ENCODE measurements at regions of chr1 and their contacts with region 1.

Region 1: GRCh38 chr1:38026592-38027200 is 14.2 kb downstream of the UTP11 start:
- DNase-seq: no peak
- H3K4me3 Mint-ChIP-seq: no peak overlapping the region
- H3K27ac Mint-ChIP-seq: peak overlapping the region; percentile 31
- H3K4me1 Mint-ChIP-seq: peaks cover 51% of the 10 kb centered on the region
- H3K27me3 Mint-ChIP-seq: no peaks in the 10 kb centered on the region

Region 2: DNA sequence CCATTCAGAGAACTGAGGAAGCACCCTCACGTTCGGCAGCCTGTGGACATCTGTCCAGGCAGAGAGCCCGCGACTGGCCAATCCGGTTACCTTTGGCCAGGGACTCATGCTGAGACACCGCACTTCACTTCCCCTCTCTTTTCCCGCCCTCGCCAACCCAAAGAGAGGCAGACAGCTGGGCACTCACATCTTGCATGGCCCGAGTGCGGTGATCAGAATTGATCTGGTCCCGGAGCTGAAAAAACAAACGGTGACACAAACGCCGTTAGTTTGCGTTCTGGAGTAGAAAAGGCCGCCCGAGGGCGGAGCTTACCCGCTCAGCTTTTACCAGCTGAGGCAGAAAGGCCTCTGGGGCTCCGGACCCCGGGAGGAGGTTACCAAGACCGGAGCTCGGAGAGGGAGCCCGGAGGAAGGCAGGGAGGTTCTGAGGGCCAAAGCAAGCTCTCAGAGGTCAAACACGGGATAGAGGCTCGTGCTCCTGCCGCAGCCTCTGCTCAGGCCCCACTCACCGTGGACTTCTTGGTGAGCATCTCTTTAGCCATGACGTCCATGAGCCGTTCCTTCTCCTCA is 37.2 kb before region 1 on chr1:
- intact Hi-C with region 1: loop called (anchors 1 kb)
- DNase-seq: peak; percentile 48
- H3K4me3 Mint-ChIP-seq: peak overlapping the region; percentile 99
- H3K27ac Mint-ChIP-seq: peak overlapping the region; percentile 95
- H3K4me1 Mint-ChIP-seq: peaks cover 16% of the 10 kb centered on the region
- H3K27me3 Mint-ChIP-seq: no peaks in the 10 kb centered on the region

Region 3: DNA sequence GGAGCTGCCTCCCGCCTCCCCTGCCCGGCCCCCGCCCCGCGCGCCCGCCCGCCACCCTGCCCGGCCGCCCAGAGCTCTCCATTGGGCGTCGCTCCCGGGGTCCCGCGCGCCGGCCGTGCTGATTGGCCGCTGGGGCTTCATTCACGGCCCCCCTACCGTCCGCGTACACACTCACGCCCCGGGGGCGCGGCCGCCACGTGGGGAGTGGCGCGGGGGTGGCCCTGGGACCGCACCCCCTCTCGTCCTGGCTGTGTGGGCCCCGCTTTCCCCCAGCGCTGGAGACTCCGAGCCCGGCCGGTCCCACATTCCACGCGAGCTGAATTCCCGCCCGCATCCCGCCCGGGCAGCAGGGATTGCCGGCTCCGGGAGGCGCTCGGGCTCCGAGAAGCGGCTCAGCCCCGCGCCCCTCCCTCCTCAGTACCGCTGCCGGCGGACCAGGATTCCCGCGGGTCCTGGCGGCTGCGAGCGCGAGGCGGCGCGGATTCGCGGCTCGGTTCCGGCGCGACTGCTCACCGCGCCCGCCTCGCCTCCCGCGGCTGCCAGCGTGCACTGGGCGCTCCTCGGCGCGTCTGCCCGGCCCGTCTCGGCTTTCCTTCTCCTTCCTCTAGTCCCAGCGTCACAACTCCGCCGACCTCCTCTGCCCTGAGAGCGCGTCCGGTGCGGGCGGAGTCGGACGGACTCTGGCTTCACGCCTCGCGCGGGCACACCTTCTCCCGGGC is 20.3 kb after region 1 on chr1:
- intact Hi-C with region 1: loop called (anchors 1 kb)
- DNase-seq: peak; percentile 62
- H3K4me3 Mint-ChIP-seq: peak overlapping the region; percentile 79
- H3K27ac Mint-ChIP-seq: no peak overlapping the region
- H3K4me1 Mint-ChIP-seq: peaks cover 5% of the 10 kb centered on the region
- H3K27me3 Mint-ChIP-seq: peaks cover 41% of the 10 kb centered on the region

Region 4: DNA sequence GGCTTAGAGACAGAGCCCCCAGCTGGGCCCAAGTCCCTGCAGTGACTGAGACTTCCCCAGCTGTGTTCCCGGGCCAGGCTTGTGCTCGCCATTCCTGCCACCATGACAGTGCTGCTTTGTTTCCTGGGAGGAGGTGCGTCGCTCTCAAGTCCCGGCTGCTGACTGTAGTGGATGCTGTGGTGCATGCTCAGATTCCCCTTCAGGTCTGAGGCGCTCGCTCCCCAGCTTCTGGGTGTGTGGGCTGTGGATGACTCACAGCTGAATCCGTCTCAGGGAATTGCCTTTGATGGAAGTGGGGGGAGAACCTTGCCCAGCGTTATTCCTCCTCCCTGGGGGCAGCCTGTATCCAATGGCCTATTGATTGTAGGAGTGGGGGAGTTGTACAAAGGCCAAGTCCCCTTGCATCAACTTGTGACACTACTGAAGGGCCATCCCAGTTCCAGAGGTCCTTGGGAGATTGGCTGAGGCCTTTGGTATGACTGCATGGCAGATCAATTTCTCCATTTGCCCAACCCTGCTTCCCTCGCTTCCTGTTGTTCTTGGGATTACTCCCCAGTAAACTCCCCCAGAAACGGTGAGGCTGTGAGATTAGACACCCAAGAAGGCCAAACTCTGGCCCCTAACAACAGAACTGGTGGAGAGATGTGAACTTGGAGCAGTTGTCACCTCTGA is 37.7 kb after region 1 on chr1:
- intact Hi-C with region 1: no loop called
- DNase-seq: no peak
- H3K4me3 Mint-ChIP-seq: no peak overlapping the region
- H3K27ac Mint-ChIP-seq: no peak overlapping the region
- H3K4me1 Mint-ChIP-seq: peaks cover 3% of the 10 kb centered on the region
- H3K27me3 Mint-ChIP-seq: peaks cover 12% of the 10 kb centered on the region

Region 5: DNA sequence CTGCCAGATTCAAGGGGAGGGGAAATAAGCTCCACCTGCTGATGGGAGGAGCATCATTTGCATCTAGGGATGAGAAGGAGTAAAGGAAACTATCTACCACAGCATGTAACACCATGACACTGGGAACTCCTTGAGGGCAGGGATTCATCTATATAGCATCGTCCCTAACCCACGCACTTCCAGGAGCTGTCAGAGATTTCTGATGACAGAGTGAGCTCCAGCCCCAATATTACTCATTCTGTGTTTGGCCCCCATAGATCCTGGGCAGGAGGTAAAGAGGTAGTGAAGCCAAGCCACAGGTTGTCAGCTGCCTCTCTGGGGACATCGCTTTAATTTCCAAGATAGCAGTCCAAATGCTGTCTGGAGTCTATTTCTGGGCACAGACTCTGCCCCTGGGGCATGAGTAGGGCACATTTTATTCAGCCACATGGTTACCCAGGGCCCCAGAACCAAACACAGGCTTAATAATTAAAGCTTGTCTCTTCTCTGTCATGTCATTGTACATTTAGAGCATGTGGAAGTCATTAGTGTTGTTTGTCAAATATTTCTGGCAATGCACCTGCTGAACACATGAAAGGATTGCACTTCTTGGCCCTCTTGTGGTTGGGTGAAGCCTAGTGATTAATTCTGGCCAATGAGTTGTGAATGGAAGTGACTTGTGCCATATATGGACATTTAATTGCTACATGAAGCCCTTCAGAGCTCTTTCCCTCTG is 125.8 kb after region 1 on chr1:
- intact Hi-C with region 1: no loop called
- DNase-seq: no peak
- H3K4me3 Mint-ChIP-seq: no peak overlapping the region
- H3K27ac Mint-ChIP-seq: no peak overlapping the region
- H3K4me1 Mint-ChIP-seq: no peaks in the 10 kb centered on the region
- H3K27me3 Mint-ChIP-seq: peaks cover 2% of the 10 kb centered on the region

Region 6: DNA sequence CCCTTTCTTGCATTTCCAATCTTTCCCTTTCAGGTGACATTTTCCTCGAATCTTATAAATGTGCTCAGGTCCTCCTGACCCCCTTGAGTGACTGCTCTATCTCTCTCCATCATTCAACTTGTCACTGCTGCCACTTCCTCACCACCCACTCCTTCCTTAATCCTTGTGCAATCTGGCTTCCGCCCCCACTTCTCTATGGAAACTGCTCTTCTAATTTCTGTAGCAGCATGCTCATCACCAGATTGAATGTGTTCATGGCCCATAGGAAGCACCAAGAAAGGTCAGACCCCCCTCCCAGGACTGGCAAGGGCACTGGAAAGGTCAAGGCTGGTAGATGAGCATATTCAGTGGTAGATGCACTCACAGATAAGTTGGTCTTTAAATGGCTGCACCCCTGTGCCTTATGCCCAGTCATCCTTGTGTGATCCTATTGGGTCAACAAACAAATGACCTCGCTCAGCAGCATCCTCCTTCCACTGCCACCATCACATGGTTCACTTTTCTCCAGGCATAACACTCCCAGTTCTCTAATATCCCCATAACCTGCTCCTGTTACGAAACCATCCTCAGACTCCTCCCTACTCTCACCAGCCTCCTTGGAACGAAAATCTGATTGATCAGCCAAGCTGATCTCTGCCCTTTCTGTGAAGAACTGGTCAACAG is 308.4 kb after region 1 on chr1:
- intact Hi-C with region 1: loop called (anchors 2 kb)
- DNase-seq: no peak
- H3K4me3 Mint-ChIP-seq: no peak overlapping the region
- H3K27ac Mint-ChIP-seq: peak overlapping the region; percentile 5
- H3K4me1 Mint-ChIP-seq: peaks cover 12% of the 10 kb centered on the region
- H3K27me3 Mint-ChIP-seq: peaks cover 8% of the 10 kb centered on the region

Region 7: GRCh38 chr1:38834937-38835827 is 808.5 kb after region 1 on chr1:
- intact Hi-C with region 1: loop called (anchors 5 kb)
- DNase-seq: peak; percentile 41
- H3K4me3 Mint-ChIP-seq: no peak overlapping the region
- H3K27ac Mint-ChIP-seq: no peak overlapping the region
- H3K4me1 Mint-ChIP-seq: peaks cover 1% of the 10 kb centered on the region
- H3K27me3 Mint-ChIP-seq: peaks cover 25% of the 10 kb centered on the region